Transverse colon (tissue), 4 donors: ENCODE measurements at regions of chr1 and their contacts with region 1.

Region 1: GRCh38 chr1:181424786-181425403 is 58.4 kb upstream of the CACNA1E start:
- DNase-seq: peak; percentile 76
- H3K4me3 ChIP-seq: no peak overlapping the region
- H3K27ac ChIP-seq: no peak overlapping the region
- H3K4me1 ChIP-seq: peaks cover 0 to 7% (median 4%) of the 10 kb centered on the region in 4 donors
- H3K27me3 ChIP-seq: peaks cover 11% of the 10 kb centered on the region
- CTCF ChIP-seq: peak; percentile 93 to 99 (median 95)
- EP300 ChIP-seq: no peak
- POLR2A ChIP-seq: no peak

Region 2: GRCh38 chr1:181189691-181190363 is 235.1 kb before region 1 on chr1:
- in situ Hi-C with region 1: loop called (anchors 5 to 25 kb)
- intact Hi-C with region 1: loop called (anchors 2 kb)
- DNase-seq: peak; percentile 75
- H3K4me3 ChIP-seq: peak overlapping the region in 3 of 4 donors; percentile 15 to 40 (median 16)
- H3K27ac ChIP-seq: no peak overlapping the region
- H3K4me1 ChIP-seq: peaks cover 0 to 11% (median 5%) of the 10 kb centered on the region in 4 donors
- H3K27me3 ChIP-seq: peaks cover 32% of the 10 kb centered on the region
- CTCF ChIP-seq: peak; percentile 82 to 99 (median 97)
- EP300 ChIP-seq: no peak
- POLR2A ChIP-seq: no peak